HepG2 (cell line): ENCODE measurements at regions of chr1 and their contacts with region 1.

Region 1: GRCh38 chr1:8097077-8097799 is 71.1 kb upstream of the ERRFI1 start:
- DNase-seq: peak; percentile 74
- ATAC-seq: peak; percentile 49
- H3K4me3 ChIP-seq: no peak overlapping the region
- H3K27ac ChIP-seq: peak overlapping the region; percentile 72
- H3K4me1 ChIP-seq: peaks cover 67% of the 10 kb centered on the region
- H3K27me3 ChIP-seq: no peaks in the 10 kb centered on the region
- CTCF ChIP-seq: no peak
- EP300 ChIP-seq: peak in 1 of 2 experiments; percentile 56; a peak in 1 of 4 replicates
- POLR2A ChIP-seq: no peak
- RAD21 ChIP-seq: no peak

Region 2: GRCh38 chr1:8040586-8040985 is 56.7 kb before region 1 on chr1:
- CTCF ChIA-PET with region 1: no interaction called
- POLR2A ChIA-PET with region 1: interaction called, 7 read pairs
- in situ Hi-C with region 1: no loop called
- intact Hi-C with region 1: loop called (anchors 10 kb)
- DNase-seq: peak; percentile 96
- ATAC-seq: peak; percentile 88
- H3K4me3 ChIP-seq: no peak overlapping the region
- H3K27ac ChIP-seq: peak overlapping the region; percentile 28
- H3K4me1 ChIP-seq: peaks cover 29% of the 10 kb centered on the region
- H3K27me3 ChIP-seq: no peaks in the 10 kb centered on the region
- CTCF ChIP-seq: no peak
- EP300 ChIP-seq: peak in 1 of 2 experiments; percentile 83; a peak in 2 of 4 replicates
- POLR2A ChIP-seq: no peak
- RAD21 ChIP-seq: no peak

Region 3: DNA sequence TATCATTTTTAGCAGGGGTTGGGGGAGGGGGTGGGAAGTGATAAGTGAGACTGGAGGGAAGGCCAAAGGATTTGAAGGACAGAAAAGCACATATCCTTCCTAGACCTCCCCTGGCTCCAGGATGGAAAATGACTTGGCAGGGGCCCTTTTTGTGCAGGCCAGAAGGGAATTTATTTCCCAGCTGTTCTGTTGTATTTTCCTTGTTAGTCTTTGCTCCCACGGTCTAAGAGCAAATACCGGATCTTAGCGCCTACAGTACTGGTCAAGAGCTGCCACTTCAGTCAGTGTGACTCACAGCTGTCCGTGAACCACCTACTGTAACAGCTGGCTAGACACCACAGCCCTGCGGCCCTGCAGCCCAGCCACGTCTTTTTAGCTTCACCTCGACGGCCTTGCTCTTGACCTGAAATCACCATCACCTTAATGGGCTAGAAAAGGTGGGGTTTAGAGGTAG is 20.1 kb before region 1 on chr1:
- CTCF ChIA-PET with region 1: no interaction called
- POLR2A ChIA-PET with region 1: interaction called, 28 read pairs
- in situ Hi-C with region 1: no loop called
- intact Hi-C with region 1: no loop called
- DNase-seq: peak; percentile 93
- ATAC-seq: peak; percentile 99
- H3K4me3 ChIP-seq: peak overlapping the region; percentile 36 to 50 (median 47); a peak in 5 of 6 replicates
- H3K27ac ChIP-seq: peak overlapping the region; percentile 57
- H3K4me1 ChIP-seq: peaks cover 89% of the 10 kb centered on the region
- H3K27me3 ChIP-seq: no peaks in the 10 kb centered on the region
- CTCF ChIP-seq: 0 out of 2 replicates have a peak, but pooled peaks have one; percentile 10
- EP300 ChIP-seq: peak in 1 of 2 experiments; percentile 62; a peak in 2 of 4 replicates
- POLR2A ChIP-seq: peak; percentile 22 to 55; a peak in 1 of 4 replicates
- RAD21 ChIP-seq: peak; percentile 26; the same call in 1 of the 2 replicates

Region 4: GRCh38 chr1:8083739-8084484 is 13.3 kb before region 1 on chr1:
- CTCF ChIA-PET with region 1: no interaction called
- POLR2A ChIA-PET with region 1: interaction called, 28 read pairs
- in situ Hi-C with region 1: no loop called
- intact Hi-C with region 1: no loop called
- DNase-seq: peak; percentile 95
- ATAC-seq: peak; percentile 95
- H3K4me3 ChIP-seq: no peak overlapping the region
- H3K27ac ChIP-seq: peak overlapping the region; percentile 63
- H3K4me1 ChIP-seq: peaks cover 85% of the 10 kb centered on the region
- H3K27me3 ChIP-seq: no peaks in the 10 kb centered on the region
- CTCF ChIP-seq: no peak
- EP300 ChIP-seq: peak in 1 of 2 experiments; percentile 95; a peak in 2 of 4 replicates
- POLR2A ChIP-seq: no peak
- RAD21 ChIP-seq: no peak